ENCODE measurements at regions of chr12 and their contacts with region 1.

Region 1: GRCh38 chr12:120249875-120250795 is 15.4 kb downstream of the PXN start:
- DNase-seq: peak; percentile 72
- ATAC-seq: peak; percentile 10
- H3K4me3 Mint-ChIP-seq: peak overlapping the region; percentile 67
- H3K27ac Mint-ChIP-seq: peak overlapping the region; percentile 90
- H3K4me1 Mint-ChIP-seq: peaks cover 77% of the 10 kb centered on the region
- H3K27me3 Mint-ChIP-seq: peaks cover 10% of the 10 kb centered on the region

Region 2: DNA sequence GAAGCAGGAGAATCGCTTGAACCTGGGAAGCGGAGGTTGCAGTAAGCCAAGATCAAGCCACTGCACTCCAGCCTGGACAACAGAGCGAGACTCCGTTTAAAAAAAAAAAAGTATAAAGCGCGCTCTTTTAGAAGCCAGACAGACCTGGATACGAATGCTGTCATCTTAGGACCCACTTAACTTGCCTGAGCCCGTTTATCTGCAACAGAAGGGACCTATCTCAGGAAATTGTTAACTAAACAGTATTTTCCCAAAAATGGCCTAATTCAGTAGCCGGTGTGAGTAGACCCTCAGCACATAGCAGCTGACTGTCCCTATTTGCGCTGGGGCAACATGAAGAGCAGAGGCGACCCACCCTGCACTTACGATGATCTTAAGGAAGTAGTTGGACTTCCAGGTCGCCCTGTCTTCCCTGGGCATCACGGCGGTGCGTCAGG is 49.8 kb before region 1 on chr12:
- CTCF ChIA-PET with region 1: interaction called, 10 read pairs
- POLR2A ChIA-PET with region 1: interaction called, 22 read pairs
- DNase-seq: no peak
- ATAC-seq: no peak
- H3K4me3 Mint-ChIP-seq: peak overlapping the region; percentile 89
- H3K27ac Mint-ChIP-seq: peak overlapping the region; percentile 98
- H3K4me1 Mint-ChIP-seq: peaks cover 46% of the 10 kb centered on the region
- H3K27me3 Mint-ChIP-seq: no peaks in the 10 kb centered on the region

Region 3: DNA sequence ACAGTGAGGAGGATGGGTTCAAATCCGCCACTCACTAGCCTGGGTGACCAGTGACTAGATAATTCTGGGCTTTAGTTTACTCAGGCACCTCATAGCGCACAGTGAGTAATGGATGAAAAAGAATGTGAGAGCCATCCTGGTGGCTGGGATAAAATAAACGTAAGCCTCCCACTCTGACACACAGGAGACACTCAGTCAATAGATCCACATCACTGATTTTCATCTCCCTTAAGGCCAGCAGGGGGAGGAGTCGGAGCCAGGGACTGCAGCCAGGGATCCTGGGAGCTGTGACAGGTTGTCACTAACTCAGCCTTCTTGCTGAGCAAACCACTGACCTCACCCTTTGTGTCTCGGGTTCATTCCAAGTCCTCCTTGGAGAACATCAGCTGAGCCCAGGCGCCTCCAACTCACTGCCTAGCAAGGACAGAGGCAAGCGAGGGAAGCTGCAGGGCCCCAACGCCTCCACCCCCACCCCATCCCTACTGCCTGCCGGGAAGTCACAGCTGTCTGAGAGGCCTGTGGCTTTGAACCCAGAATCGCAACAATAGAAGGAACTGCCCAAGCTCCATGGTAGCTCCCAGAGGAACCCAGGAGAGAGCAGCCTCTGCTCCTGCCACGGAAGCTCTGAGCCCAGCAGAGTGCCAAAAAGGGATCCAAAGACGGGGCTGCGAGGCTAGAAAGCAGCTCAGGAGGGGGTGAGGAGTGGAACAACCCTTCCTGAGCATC is 15.3 kb before region 1 on chr12:
- CTCF ChIA-PET with region 1: interaction called, 922 read pairs
- POLR2A ChIA-PET with region 1: interaction called, 9 read pairs
- DNase-seq: no peak
- ATAC-seq: no peak
- H3K4me3 Mint-ChIP-seq: no peak overlapping the region
- H3K27ac Mint-ChIP-seq: no peak overlapping the region
- H3K4me1 Mint-ChIP-seq: peaks cover 74% of the 10 kb centered on the region
- H3K27me3 Mint-ChIP-seq: no peaks in the 10 kb centered on the region